Activated CD4-positive, alpha-beta T cell treated with anti-CD3 and anti-CD28 coated beads, Interleukin-2, amount 10 ng/mL, durations not matched to agents 24 days and 14 days (primary cell): ENCODE measurements at regions of chr2 and their contacts with region 1.

Region 1: GRCh38 chr2:121080013-121080772 is 204.8 kb downstream of the TFCP2L1 start:
- DNase-seq: peak; percentile 84
- H3K4me3 Mint-ChIP-seq: no peak overlapping the region
- H3K27ac Mint-ChIP-seq: no peak overlapping the region
- H3K4me1 Mint-ChIP-seq: peaks cover 2% of the 10 kb centered on the region
- H3K27me3 Mint-ChIP-seq: peaks cover 15% of the 10 kb centered on the region

Region 2: GRCh38 chr2:120693121-120693520 is 387.1 kb before region 1 on chr2:
- intact Hi-C with region 1: loop called (anchors 1 kb)
- DNase-seq: no peak
- H3K4me3 Mint-ChIP-seq: no peak overlapping the region
- H3K27ac Mint-ChIP-seq: no peak overlapping the region
- H3K4me1 Mint-ChIP-seq: no peaks in the 10 kb centered on the region
- H3K27me3 Mint-ChIP-seq: peaks cover 36% of the 10 kb centered on the region

Region 3: GRCh38 chr2:121356058-121356640 is 276.0 kb after region 1 on chr2:
- intact Hi-C with region 1: loop called (anchors 10 kb)
- DNase-seq: peak; percentile 75
- H3K4me3 Mint-ChIP-seq: no peak overlapping the region
- H3K27ac Mint-ChIP-seq: no peak overlapping the region
- H3K4me1 Mint-ChIP-seq: peaks cover 1% of the 10 kb centered on the region
- H3K27me3 Mint-ChIP-seq: no peaks in the 10 kb centered on the region

Region 4: GRCh38 chr2:121710470-121711170 is 630.4 kb after region 1 on chr2:
- intact Hi-C with region 1: loop called (anchors 10 kb)
- DNase-seq: no peak
- H3K4me3 Mint-ChIP-seq: no peak overlapping the region
- H3K27ac Mint-ChIP-seq: no peak overlapping the region
- H3K4me1 Mint-ChIP-seq: no peaks in the 10 kb centered on the region
- H3K27me3 Mint-ChIP-seq: peaks cover 1% of the 10 kb centered on the region